Natural killer cell (primary cell): ENCODE measurements at regions of chr20 and their contacts with region 1.

Region 1: GRCh38 chr20:38730989-38731737 is 6.9 kb downstream of the SLC32A1 start:
- DNase-seq: peak; percentile 74 to 88
- ATAC-seq: peak; percentile 78 to 83 (median 81)
- H3K4me3 ChIP-seq: peak overlapping the region; percentile 17
- H3K4me3 Mint-ChIP-seq: peak overlapping the region; percentile 67
- H3K27ac ChIP-seq: no peak overlapping the region
- H3K27ac Mint-ChIP-seq: peak overlapping the region in 1 of 2 donors; percentile 36
- H3K4me1 ChIP-seq: peaks cover 55% of the 10 kb centered on the region
- H3K4me1 Mint-ChIP-seq: peaks cover 45 to 47% of the 10 kb centered on the region in 2 donors
- H3K27me3 ChIP-seq: peaks cover 81% of the 10 kb centered on the region
- H3K27me3 Mint-ChIP-seq: peaks cover 85 to 88% of the 10 kb centered on the region in 2 donors
- CTCF ChIP-seq: peak; percentile 99

Region 2: DNA sequence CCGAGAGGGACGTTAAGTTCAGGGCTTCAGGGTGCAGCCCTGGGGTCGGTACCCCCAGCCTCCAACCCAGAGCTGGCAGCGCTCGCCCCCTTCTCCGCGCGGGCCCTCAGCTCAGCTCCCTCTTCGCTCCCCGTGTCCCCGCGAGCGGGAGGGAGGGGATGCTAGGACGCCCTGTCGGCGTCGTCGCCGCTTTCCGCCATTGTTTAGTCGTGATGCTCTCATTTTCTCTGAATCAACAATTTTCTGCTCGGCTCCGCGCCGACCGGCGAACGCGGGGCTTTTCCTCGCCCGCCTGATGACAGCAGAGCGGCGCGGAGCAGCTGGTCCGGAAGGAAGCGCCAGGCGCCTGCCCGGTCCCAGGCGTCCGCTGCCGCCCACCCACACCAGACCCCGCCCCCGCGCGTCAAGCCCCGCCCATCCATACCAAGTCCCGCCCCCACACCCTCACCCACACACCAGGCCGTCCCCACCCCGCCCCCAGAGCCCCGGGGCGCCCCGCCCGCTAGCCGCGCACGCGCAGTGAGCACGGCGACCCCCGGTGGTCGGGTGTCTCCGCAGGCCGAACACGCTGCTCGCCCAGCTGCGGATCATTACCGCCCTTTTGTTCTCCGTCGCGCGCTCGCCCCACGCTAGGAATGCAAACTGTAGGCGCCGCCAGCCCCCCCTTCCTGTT is 56.9 kb before region 1 on chr20:
- intact Hi-C with region 1: no loop called
- DNase-seq: peak; percentile 61 to 78
- ATAC-seq: peak; percentile 93 to 95 (median 94)
- H3K4me3 ChIP-seq: peak overlapping the region; percentile 76
- H3K4me3 Mint-ChIP-seq: peak overlapping the region; percentile 90
- H3K27ac ChIP-seq: peak overlapping the region; percentile 43
- H3K27ac Mint-ChIP-seq: peak overlapping the region; percentile 61 to 88
- H3K4me1 ChIP-seq: peaks cover 16% of the 10 kb centered on the region
- H3K4me1 Mint-ChIP-seq: peaks cover 5 to 17% of the 10 kb centered on the region in 2 donors
- H3K27me3 ChIP-seq: peaks cover 8% of the 10 kb centered on the region
- H3K27me3 Mint-ChIP-seq: peaks cover 9 to 14% of the 10 kb centered on the region in 2 donors
- CTCF ChIP-seq: no peak

Region 3: GRCh38 chr20:38692436-38693411 is 38.4 kb before region 1 on chr20:
- intact Hi-C with region 1: no loop called
- DNase-seq: peak; percentile 31 to 74
- ATAC-seq: peak in 1 of 3 donors; percentile 44
- H3K4me3 ChIP-seq: no peak overlapping the region
- H3K4me3 Mint-ChIP-seq: no peak overlapping the region
- H3K27ac ChIP-seq: no peak overlapping the region
- H3K27ac Mint-ChIP-seq: no peak overlapping the region
- H3K4me1 ChIP-seq: no peaks in the 10 kb centered on the region
- H3K4me1 Mint-ChIP-seq: no peaks in the 10 kb centered on the region
- H3K27me3 ChIP-seq: no peaks in the 10 kb centered on the region
- H3K27me3 Mint-ChIP-seq: peaks cover 18 to 46% of the 10 kb centered on the region in 2 donors
- CTCF ChIP-seq: no peak

Region 4: DNA sequence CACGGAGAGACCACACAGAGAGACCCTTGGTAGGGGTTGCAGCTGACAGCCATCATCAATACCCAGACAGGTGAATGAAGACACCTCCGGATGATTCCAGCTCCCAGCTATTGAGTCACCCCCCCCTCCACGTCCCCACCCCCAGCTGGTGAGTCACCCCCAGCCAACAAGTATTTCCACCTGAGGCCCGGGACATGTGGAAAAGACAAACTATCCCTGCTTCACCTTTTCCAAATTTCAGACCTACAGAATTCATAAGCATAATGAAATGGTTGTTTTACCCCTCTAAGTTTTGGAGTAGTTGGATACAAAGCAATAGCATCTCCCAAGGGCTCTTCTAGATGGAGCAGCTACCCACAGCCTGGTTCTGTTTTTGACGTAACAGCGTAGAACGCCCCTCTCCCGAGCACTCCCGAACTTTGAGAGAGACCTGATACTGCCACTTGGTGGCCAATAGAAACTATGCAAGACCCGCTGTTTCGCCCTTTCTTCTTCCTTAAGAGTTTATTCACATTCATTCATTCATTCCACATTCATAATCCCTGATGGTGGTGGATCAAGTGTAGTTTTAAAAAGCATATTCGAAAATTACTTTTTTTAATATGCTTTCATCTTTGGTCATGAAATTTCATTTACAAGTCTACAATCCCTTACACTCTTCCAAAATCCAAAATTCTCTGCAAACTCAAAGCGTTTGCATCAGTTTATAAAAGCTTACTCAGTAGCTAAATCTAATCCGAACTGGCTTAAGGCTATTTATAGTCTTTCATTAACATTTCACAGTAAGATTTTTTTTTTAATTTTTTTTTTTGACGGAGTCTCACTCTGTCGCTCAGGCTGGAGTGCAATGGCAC is 59.3 kb after region 1 on chr20:
- intact Hi-C with region 1: loop called (anchors 5 kb)
- DNase-seq: peak in 1 of 2 donors; percentile 81
- ATAC-seq: peak; percentile 64 to 83 (median 82)
- H3K4me3 ChIP-seq: no peak overlapping the region
- H3K4me3 Mint-ChIP-seq: no peak overlapping the region
- H3K27ac ChIP-seq: no peak overlapping the region
- H3K27ac Mint-ChIP-seq: peak overlapping the region in 1 of 2 donors; percentile 73
- H3K4me1 ChIP-seq: peaks cover 8% of the 10 kb centered on the region
- H3K4me1 Mint-ChIP-seq: peaks cover 6 to 23% of the 10 kb centered on the region in 2 donors
- H3K27me3 ChIP-seq: no peaks in the 10 kb centered on the region
- H3K27me3 Mint-ChIP-seq: no peaks in the 10 kb centered on the region
- CTCF ChIP-seq: peak; percentile 68